GM10248 (cell line): ENCODE measurements at regions of chr3 and their contacts with region 1.

Region 1: DNA sequence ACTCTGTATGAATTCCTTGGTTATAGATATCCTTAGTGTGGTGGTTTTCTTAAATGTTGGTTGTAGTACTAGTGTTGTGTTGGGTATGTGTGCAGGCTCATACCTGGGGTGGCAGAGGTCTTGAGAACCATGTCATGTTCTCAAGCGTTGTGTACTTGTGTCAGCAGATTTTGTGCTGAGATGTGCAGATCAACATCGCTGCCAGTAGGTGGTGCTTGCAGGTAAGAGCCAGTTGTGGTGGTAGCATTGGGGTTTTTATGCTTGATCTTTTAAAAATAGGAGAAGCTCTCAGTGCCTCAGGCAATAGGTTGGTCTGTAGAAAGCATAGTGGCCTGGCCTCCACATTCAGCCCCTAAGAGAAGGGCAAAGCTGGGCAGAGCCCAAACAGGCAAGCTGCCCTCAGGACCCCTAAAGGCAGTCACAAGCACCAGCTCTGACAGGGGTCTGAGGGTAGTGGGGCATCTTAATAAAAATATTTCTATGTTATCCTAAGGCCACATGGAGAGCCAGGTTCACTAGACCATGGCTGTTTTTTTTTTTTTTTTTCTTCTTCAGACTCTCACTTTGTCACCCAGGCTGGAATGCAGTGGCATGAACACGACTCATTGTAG is 164.0 kb downstream of the IL20RB start:
- DNase-seq: peak; percentile 55
- CTCF ChIP-seq: peak; percentile 74

Region 2: GRCh38 chr3:137084586-137084985 is 37.2 kb before region 1 on chr3:
- CTCF ChIA-PET with region 1: no interaction called
- POLR2A ChIA-PET with region 1: no interaction called
- DNase-seq: no peak
- CTCF ChIP-seq: no peak

Region 3: GRCh38 chr3:137105277-137105977 is 16.4 kb before region 1 on chr3:
- CTCF ChIA-PET with region 1: interaction called, 99 read pairs
- POLR2A ChIA-PET with region 1: no interaction called
- DNase-seq: peak; percentile 47
- CTCF ChIP-seq: peak; percentile 71

Region 4: GRCh38 chr3:137134431-137134830 is 12.6 kb after region 1 on chr3:
- CTCF ChIA-PET with region 1: interaction called, 28 read pairs
- POLR2A ChIA-PET with region 1: no interaction called
- DNase-seq: no peak
- CTCF ChIP-seq: no peak